ENCODE measurements at regions of chr12 and their contacts with region 1.

Region 1: DNA sequence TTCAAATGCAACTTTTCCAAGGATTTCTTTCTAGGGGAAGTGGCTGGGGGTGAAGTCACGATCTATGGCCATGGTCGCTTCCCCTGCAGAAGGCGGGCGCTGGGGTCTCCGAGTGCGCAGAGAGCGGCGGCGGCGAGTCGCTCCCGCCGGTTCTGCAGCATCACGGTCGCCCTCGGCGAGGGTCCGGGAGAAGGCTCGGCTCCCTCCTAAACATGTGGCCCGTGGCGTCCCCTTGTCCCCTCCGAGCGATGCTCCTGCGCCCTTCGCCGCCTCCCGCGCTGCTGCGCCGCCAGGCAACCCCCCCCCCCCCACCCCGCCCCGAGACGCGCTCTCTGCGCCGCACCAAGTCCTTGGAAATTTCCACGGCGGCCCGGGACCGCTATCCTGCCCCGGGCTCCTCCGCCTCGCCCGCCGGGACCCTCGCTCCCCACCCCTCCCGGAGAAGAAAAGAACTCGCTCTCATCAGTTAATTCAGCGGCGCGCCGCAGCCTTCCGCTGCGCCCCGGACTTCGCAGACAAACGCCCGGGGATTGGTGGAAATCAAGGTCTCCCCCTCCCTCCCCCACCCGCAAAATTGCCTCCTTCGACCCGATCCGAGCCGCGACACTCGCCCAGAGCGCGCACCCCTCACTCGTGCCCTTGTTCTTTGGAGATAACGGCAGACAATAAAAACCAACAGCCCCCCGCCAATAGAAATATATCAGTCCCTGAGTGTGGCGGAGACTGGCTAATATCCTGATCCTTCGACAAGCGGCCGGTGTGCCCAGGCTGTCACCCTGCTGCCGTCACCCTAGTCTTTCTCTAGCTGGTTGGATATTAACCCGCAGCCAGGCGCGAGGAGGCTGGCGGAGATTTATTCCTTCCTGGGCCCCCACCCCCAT is at the start of gene ST8SIA1:
- DNase-seq: peak; percentile 53
- ATAC-seq: peak; percentile 13
- H3K4me3 Mint-ChIP-seq: peak within 1 kb of the TSS; percentile 83
- H3K27ac Mint-ChIP-seq: no peak within 1 kb of the TSS
- H3K4me1 Mint-ChIP-seq: peaks cover 25% of the 10 kb centered on the region
- H3K27me3 Mint-ChIP-seq: peaks cover 49% of the 10 kb centered on the region
- CTCF ChIP-seq: no peak
- total RNA-seq, gene ST8SIA1: 2.3 to 2.8 TPM (median 2.3 TPM) in 3 replicates

Region 2: GRCh38 chr12:22083167-22083566 is 251.5 kb before region 1 on chr12:
- CTCF ChIA-PET with region 1: interaction called, 12 read pairs
- POLR2A ChIA-PET with region 1: no interaction called
- DNase-seq: no peak
- ATAC-seq: no peak
- H3K4me3 Mint-ChIP-seq: no peak overlapping the region
- H3K27ac Mint-ChIP-seq: no peak overlapping the region
- H3K4me1 Mint-ChIP-seq: peaks cover 20% of the 10 kb centered on the region
- H3K27me3 Mint-ChIP-seq: no peaks in the 10 kb centered on the region
- CTCF ChIP-seq: no peak

Region 3: DNA sequence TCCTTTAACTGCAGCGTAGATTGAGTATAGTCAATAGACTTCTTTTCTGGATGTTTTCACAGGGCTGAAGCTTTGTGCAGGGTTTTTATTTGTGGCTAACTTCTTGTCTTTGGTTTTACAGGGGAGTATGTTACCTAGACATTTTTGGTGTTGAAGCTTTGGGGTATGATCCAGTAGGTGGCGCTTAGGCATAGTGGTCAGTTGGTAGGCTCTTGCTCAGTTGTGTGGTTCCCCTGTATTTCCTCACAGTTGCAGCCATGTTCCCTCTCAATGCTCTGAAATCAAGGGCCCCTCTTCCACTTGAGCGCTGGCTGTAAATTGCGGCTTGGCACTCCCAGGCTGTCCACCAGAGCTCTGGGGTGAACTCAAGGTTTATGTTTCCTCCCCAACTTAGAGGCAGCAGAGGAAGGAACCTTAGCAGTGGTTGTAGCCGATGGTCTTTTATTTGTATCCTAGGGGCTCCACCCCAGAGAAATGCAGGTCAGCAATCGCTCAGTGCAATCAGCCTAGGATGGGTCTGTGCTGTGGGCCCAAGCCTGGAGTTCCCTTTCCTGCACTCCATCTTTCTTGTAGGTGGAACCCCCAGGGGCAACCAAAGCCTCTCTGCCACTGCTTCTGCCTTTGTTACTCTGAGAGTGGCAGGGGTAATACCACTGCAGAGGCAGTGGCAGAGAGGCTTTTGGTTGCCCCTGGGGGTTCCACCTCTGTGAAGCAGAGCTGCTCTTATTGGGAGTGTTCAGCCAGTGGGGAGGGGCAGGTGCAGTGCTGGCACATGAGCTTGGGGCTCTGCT is 233.5 kb before region 1 on chr12:
- CTCF ChIA-PET with region 1: interaction called, 22 read pairs
- POLR2A ChIA-PET with region 1: no interaction called
- DNase-seq: peak; percentile 44
- ATAC-seq: peak; percentile 93
- H3K4me3 Mint-ChIP-seq: no peak overlapping the region
- H3K27ac Mint-ChIP-seq: no peak overlapping the region
- H3K4me1 Mint-ChIP-seq: no peaks in the 10 kb centered on the region
- H3K27me3 Mint-ChIP-seq: no peaks in the 10 kb centered on the region
- CTCF ChIP-seq: peak; percentile 36; the same call in 1 of the 2 replicates

Region 4: DNA sequence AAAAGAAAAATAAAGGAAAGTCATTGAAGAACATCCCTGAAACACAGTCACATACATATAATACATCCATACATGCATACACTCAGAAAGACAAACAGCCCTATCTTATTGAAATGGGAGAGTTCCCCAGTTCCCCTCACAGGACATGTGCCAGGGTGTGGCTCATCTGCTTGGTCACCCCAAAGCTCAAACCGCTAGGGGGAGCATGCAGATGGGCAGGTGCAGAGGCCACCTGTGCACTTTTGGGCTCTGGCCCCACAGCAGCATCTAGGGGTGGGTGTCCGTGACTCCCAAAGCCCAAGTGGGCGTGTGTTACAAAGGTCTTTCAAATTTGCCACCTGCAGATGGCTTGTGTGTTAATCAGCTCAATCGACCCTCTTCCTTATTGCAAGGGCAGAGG is 213.4 kb before region 1 on chr12:
- CTCF ChIA-PET with region 1: interaction called, 24 read pairs
- POLR2A ChIA-PET with region 1: interaction called, 7 read pairs
- DNase-seq: peak; percentile 75
- ATAC-seq: peak; percentile 100
- H3K4me3 Mint-ChIP-seq: no peak overlapping the region
- H3K27ac Mint-ChIP-seq: no peak overlapping the region
- H3K4me1 Mint-ChIP-seq: no peaks in the 10 kb centered on the region
- H3K27me3 Mint-ChIP-seq: no peaks in the 10 kb centered on the region
- CTCF ChIP-seq: peak; percentile 54

Region 5: GRCh38 chr12:22215467-22216253 is 119.0 kb before region 1 on chr12:
- CTCF ChIA-PET with region 1: no interaction called
- POLR2A ChIA-PET with region 1: no interaction called
- DNase-seq: no peak
- ATAC-seq: no peak
- H3K4me3 Mint-ChIP-seq: no peak overlapping the region
- H3K27ac Mint-ChIP-seq: no peak overlapping the region
- H3K4me1 Mint-ChIP-seq: peaks cover 4% of the 10 kb centered on the region
- H3K27me3 Mint-ChIP-seq: no peaks in the 10 kb centered on the region
- CTCF ChIP-seq: no peak

Region 6: DNA sequence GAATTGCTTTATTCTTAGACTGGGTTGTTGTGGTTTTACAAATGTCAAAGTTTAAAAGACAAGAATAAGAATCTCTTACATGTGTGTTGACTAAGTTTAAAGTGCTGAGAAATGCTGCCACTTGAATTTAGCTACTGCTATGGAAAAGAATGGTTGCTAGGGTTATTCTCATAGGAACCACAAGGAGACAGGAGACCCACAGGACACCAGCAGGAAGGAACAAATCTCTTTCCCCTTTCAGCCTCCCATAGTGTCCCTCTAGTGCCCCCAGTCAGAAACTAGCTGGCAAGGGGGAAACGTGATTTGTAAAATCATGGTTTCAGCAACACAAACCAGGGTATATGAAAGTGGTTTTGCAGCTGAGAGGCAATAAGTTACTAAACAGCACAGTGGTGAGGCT is 102.8 kb before region 1 on chr12:
- CTCF ChIA-PET with region 1: interaction called, 22 read pairs
- POLR2A ChIA-PET with region 1: interaction called, 5 read pairs
- DNase-seq: no peak
- ATAC-seq: peak; percentile 90
- H3K4me3 Mint-ChIP-seq: no peak overlapping the region
- H3K27ac Mint-ChIP-seq: no peak overlapping the region
- H3K4me1 Mint-ChIP-seq: peaks cover 7% of the 10 kb centered on the region; the same call in 1 of the 2 replicates
- H3K27me3 Mint-ChIP-seq: no peaks in the 10 kb centered on the region
- CTCF ChIP-seq: no peak

Region 7: DNA sequence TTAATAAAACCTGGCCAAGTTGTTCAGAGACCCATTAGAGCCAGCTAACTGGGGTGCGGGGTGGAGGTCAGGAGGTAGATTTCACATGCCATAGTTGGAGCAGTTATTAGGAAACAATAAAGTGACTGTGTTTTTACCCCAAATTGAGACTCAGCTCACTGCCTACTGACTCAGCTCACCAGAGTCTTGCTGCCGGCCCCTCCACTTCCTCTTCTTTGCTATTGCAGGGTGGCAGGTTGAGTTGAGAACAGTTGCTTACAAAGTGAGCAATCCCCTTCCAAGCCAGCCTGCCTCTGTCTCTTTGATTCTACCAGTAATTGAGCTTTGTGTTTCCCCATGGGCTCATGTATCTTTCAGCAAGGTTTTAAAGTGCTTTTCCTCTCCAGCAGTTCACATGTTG is 13.0 kb before region 1 on chr12:
- CTCF ChIA-PET with region 1: interaction called, 10 read pairs
- POLR2A ChIA-PET with region 1: no interaction called
- DNase-seq: no peak
- ATAC-seq: peak; percentile 57
- H3K4me3 Mint-ChIP-seq: no peak overlapping the region
- H3K27ac Mint-ChIP-seq: no peak overlapping the region
- H3K4me1 Mint-ChIP-seq: peaks cover 16% of the 10 kb centered on the region
- H3K27me3 Mint-ChIP-seq: no peaks in the 10 kb centered on the region
- CTCF ChIP-seq: no peak

Region 8: GRCh38 chr12:22350886-22351285 is 16.2 kb after region 1 on chr12:
- CTCF ChIA-PET with region 1: no interaction called
- POLR2A ChIA-PET with region 1: no interaction called
- DNase-seq: no peak
- ATAC-seq: no peak
- H3K4me3 Mint-ChIP-seq: no peak overlapping the region
- H3K27ac Mint-ChIP-seq: no peak overlapping the region
- H3K4me1 Mint-ChIP-seq: no peaks in the 10 kb centered on the region
- H3K27me3 Mint-ChIP-seq: no peaks in the 10 kb centered on the region
- CTCF ChIP-seq: no peak

Region 9: DNA sequence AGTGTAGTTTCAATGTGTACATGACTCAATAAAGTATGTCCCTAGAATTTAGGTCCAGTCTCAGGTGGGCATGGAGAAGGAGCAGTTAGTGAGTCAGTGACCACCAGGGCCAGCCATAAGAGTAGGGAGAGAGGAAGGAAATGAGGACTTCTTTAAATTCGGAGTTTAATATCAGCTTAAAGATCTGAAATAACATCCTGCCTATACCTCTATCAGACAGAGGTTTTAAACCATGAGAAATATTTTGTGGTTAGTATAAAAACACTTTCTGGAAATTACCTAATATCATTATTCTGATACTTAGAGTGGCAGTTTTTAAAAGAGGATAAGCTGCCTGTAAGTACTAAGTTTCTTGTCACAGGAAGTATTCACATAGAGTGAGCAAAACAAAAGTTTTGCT is 61.6 kb after region 1 on chr12:
- CTCF ChIA-PET with region 1: no interaction called
- POLR2A ChIA-PET with region 1: no interaction called
- DNase-seq: no peak
- ATAC-seq: no peak
- H3K4me3 Mint-ChIP-seq: no peak overlapping the region
- H3K27ac Mint-ChIP-seq: no peak overlapping the region
- H3K4me1 Mint-ChIP-seq: no peaks in the 10 kb centered on the region
- H3K27me3 Mint-ChIP-seq: no peaks in the 10 kb centered on the region; the same call in 1 of the 2 replicates
- CTCF ChIP-seq: no peak

Measured in WTC11 (cell line).